Heart right ventricle (tissue), 16 donors: ENCODE measurements at regions of chr10 and their contacts with region 1.

Region 1: GRCh38 chr10:81414038-81414437 is 461.0 kb upstream of the NRG3 start:
- DNase-seq: no peak
- ATAC-seq: no peak
- H3K4me3 ChIP-seq: no peak overlapping the region
- H3K27ac ChIP-seq: no peak overlapping the region
- H3K4me1 ChIP-seq: no peaks in the 10 kb centered on the region
- H3K27me3 ChIP-seq: no peaks in the 10 kb centered on the region
- CTCF ChIP-seq: no peak

Region 2: GRCh38 chr10:81514811-81515210 is 100.8 kb after region 1 on chr10:
- intact Hi-C with region 1: loop called in 1 of 10 experiments (anchors 5 kb)
- DNase-seq: no peak
- ATAC-seq: no peak
- H3K4me3 ChIP-seq: no peak overlapping the region
- H3K27ac ChIP-seq: no peak overlapping the region
- H3K4me1 ChIP-seq: no peaks in the 10 kb centered on the region
- H3K27me3 ChIP-seq: no peaks in the 10 kb centered on the region
- CTCF ChIP-seq: no peak